Cardiac septum (tissue), 1 donor: ENCODE measurements at regions of chr6 and their contacts with region 1.

Region 1: GRCh38 chr6:26031595-26032339 is 55.5 kb upstream of the HFE start:
- DNase-seq: peak; percentile 86

Region 2: GRCh38 chr6:24910961-24911712 is 1120.6 kb before region 1 on chr6:
- intact Hi-C with region 1: no loop called
- DNase-seq: peak; percentile 80

Region 3: DNA sequence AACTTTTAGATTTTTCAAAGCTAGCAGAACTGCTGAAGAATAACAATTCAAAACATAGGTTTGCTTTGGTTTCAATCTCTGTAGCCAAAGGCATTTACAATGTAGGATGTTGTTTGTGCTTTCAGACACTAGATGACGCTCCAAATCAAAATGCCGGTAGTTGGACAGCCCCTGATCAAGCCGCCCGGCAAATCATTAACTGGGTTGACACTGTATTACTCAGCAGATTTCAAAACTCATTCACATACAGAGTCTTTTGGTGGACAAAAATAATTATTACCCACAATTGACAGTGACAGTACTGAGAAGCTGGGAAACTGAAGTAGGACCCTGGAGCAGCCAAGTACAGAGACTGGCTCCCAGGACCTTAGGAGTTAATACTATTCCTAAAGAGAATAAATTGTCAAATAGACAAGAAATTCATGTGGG is 34.2 kb after region 1 on chr6:
- intact Hi-C with region 1: no loop called
- DNase-seq: no peak

Region 4: DNA sequence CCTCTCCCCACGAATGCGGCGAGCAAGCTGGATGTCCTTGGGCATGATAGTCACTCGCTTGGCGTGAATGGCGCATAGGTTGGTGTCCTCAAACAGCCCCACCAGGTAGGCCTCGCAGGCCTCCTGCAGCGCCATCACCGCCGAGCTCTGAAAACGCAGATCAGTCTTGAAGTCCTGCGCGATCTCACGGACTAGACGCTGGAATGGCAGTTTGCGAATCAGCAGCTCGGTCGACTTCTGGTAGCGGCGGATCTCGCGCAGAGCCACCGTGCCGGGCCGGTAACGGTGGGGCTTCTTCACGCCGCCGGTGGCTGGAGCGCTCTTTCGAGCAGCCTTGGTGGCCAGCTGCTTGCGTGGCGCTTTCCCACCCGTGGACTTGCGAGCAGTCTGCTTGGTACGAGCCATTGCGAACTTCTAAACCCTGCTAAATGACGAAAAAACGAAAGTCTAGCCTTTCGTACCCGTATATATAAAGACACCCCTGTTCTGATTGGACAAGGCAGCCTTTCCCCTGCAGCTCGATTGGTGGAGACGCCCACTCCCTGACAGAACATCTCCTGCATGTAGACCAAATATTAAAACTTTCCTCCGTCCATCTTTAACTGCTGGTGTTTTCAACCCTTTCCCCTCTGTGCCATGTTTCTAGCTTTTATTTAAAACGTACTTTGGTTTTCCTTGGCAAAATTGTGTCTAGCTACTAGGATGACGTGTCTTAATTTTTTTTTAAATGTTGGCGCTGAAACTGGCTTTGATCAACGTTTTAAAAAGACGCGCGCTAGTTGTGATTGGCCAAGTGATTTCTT is 165.3 kb after region 1 on chr6:
- intact Hi-C with region 1: loop called (anchors 2 kb)
- DNase-seq: peak; percentile 84

Region 5: DNA sequence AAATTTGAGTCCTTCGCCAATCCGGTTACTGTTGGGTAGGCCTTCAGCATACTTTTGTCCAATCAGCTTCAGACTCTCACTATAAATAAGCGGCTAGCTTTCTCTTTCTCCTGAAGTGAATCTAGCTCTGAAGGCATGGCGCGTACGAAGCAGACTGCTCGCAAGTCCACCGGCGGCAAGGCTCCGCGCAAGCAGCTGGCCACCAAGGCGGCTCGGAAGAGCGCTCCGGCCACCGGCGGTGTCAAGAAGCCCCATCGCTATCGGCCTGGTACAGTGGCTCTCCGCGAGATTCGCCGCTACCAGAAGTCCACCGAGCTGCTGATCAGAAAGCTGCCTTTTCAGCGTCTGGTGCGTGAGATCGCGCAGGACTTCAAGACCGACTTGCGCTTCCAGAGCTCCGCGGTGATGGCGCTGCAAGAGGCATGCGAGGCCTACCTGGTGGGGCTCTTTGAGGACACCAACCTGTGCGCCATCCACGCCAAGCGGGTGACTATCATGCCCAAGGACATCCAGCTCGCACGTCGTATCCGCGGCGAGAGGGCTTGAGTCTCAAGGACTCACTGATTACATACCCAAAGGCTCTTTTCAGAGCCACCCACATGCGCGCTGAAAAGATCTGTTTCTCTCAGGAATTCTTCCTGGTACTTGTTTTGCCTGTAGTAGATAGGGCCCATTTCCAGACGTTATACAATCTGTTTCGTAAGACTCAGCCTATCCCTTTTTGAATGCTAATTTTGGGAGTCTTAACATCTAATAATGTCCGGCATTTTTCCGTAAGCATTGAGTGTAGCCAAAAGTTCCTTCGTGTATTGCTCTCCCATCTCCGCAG is 1778.4 kb after region 1 on chr6:
- intact Hi-C with region 1: loop called (anchors 10 kb)
- DNase-seq: peak; percentile 88